ENCODE measurements at regions of chr14 and their contacts with region 1.

Region 1: DNA sequence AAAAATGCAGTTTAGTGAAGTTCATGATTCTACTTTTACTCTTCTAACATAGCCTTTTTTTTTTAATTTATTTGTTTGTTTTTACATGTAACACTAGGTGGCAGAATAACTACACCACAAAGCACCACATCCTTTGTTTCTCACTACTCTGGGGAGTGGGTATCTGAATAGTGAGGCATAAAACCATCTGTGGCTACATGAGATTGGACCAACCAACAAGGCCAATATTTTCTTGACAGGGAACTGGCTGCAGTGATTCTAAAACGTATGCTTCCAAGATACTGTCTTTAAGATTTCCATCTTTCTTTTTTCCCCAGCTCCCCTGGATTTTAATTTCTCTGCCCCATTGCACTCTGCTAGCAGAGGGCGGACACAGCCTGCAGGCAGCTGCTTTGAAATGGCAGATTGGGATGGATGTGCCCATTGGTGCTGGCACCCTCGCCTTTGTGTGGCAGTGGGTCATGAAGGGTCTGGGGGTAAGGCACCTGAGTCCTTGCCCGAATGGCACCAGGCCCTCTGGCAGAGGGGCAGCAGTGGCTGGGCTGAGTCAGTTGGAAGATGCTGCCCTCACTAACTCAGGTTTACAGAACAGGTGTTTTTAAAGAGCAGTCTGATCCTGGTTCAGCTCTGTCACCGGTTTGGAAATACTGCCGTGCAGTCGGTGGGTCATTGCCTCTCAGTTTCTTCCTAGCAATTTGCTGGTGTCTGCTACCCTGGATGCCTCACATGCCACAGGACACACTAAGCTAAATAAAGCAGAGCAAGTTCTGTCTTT is 429.1 kb downstream of the RAD51B start:
- DNase-seq: peak; percentile 80
- ATAC-seq: peak; percentile 83
- H3K4me3 ChIP-seq: no peak overlapping the region
- H3K4me3 Mint-ChIP-seq: peak overlapping the region; percentile 5
- H3K27ac ChIP-seq: peak overlapping the region; percentile 39 to 73
- H3K27ac Mint-ChIP-seq: peak overlapping the region; percentile 88
- H3K4me1 ChIP-seq: peaks cover 40 to 54% of the 10 kb centered on the region in 2 donors
- H3K4me1 Mint-ChIP-seq: peaks cover 65% of the 10 kb centered on the region
- H3K27me3 ChIP-seq: no peaks in the 10 kb centered on the region
- H3K27me3 Mint-ChIP-seq: no peaks in the 10 kb centered on the region
- CTCF ChIP-seq: peak; percentile 85

Region 2: GRCh38 chr14:68261092-68261842 is 12.6 kb after region 1 on chr14:
- CTCF ChIA-PET with region 1: interaction called, 38 read pairs
- POLR2A ChIA-PET with region 1: no interaction called
- intact Hi-C with region 1: no loop called
- DNase-seq: no peak
- ATAC-seq: peak; percentile 28
- H3K4me3 ChIP-seq: peak overlapping the region in 1 of 5 experiments; percentile 45
- H3K4me3 Mint-ChIP-seq: peak overlapping the region; percentile 68
- H3K27ac ChIP-seq: peak overlapping the region in 1 of 2 donors; percentile 62
- H3K27ac Mint-ChIP-seq: peak overlapping the region; percentile 81
- H3K4me1 ChIP-seq: peaks cover 47 to 57% of the 10 kb centered on the region in 2 donors
- H3K4me1 Mint-ChIP-seq: peaks cover 71% of the 10 kb centered on the region
- H3K27me3 ChIP-seq: no peaks in the 10 kb centered on the region
- H3K27me3 Mint-ChIP-seq: no peaks in the 10 kb centered on the region
- CTCF ChIP-seq: no peak

Region 3: DNA sequence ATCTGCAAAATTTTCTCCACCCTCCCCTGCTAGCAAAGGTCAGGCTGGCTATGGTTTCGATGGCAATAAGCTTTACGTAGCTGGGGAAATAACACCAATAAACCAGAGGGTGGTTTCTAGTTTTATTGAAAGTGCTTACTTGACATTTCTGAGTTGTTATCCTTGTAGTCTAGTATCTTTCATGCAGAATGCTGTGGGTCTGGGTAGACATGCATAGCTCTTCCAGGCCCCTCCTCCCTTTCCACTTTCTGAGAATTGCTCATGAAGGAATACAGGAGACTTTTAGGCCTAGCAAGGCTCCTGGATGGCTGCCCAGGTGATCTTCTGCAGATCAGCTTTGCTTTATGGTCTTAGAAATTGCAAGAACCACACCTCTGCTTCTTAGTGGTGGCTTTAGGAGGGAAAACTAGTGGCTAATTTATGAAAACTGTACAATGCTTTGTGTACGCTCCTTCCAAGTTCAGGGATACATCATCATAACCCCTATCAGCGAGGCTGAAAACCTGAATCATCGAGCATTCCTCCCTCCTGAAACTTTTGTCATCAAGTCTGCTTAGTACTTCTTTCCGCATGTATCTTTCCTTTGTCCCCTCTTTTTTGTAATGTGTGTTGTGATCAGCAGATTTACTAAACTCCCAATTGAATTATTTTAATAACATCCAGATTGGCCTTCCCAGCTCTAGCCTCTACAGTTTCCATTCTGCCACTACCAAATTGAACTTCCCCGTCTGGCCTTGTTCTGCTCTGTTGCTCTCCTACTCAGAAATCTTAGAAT is 44.0 kb after region 1 on chr14:
- CTCF ChIA-PET with region 1: interaction called, 110 read pairs
- POLR2A ChIA-PET with region 1: no interaction called
- intact Hi-C with region 1: no loop called
- DNase-seq: no peak
- ATAC-seq: peak; percentile 46
- H3K4me3 ChIP-seq: peak overlapping the region in 1 of 5 experiments; percentile 21
- H3K4me3 Mint-ChIP-seq: peak overlapping the region; percentile 62
- H3K27ac ChIP-seq: peak overlapping the region; percentile 70 to 85
- H3K27ac Mint-ChIP-seq: peak overlapping the region; percentile 93
- H3K4me1 ChIP-seq: peaks cover 60 to 68% of the 10 kb centered on the region in 2 donors
- H3K4me1 Mint-ChIP-seq: peaks cover 69% of the 10 kb centered on the region
- H3K27me3 ChIP-seq: no peaks in the 10 kb centered on the region
- H3K27me3 Mint-ChIP-seq: no peaks in the 10 kb centered on the region
- CTCF ChIP-seq: no peak

Region 4: GRCh38 chr14:68377459-68377858 is 128.8 kb after region 1 on chr14:
- CTCF ChIA-PET with region 1: interaction called, 21 read pairs
- POLR2A ChIA-PET with region 1: interaction called, 3 read pairs
- intact Hi-C with region 1: no loop called
- DNase-seq: peak; percentile 67
- ATAC-seq: peak; percentile 50
- H3K4me3 ChIP-seq: peak overlapping the region in 1 of 5 experiments; percentile 27
- H3K4me3 Mint-ChIP-seq: peak overlapping the region; percentile 76
- H3K27ac ChIP-seq: peak overlapping the region; percentile 34 to 60
- H3K27ac Mint-ChIP-seq: peak overlapping the region; percentile 92
- H3K4me1 ChIP-seq: peaks cover 50 to 54% of the 10 kb centered on the region in 2 donors
- H3K4me1 Mint-ChIP-seq: peaks cover 63% of the 10 kb centered on the region
- H3K27me3 ChIP-seq: no peaks in the 10 kb centered on the region
- H3K27me3 Mint-ChIP-seq: no peaks in the 10 kb centered on the region
- CTCF ChIP-seq: no peak

Region 5: GRCh38 chr14:68506021-68506644 is 257.5 kb after region 1 on chr14:
- CTCF ChIA-PET with region 1: interaction called, 13 read pairs
- POLR2A ChIA-PET with region 1: no interaction called
- intact Hi-C with region 1: no loop called
- DNase-seq: no peak
- ATAC-seq: no peak
- H3K4me3 ChIP-seq: no peak overlapping the region
- H3K4me3 Mint-ChIP-seq: peak overlapping the region; percentile 40
- H3K27ac ChIP-seq: peak overlapping the region; percentile 79 to 88
- H3K27ac Mint-ChIP-seq: peak overlapping the region; percentile 89
- H3K4me1 ChIP-seq: peaks cover 73 to 86% of the 10 kb centered on the region in 2 donors
- H3K4me1 Mint-ChIP-seq: peaks cover 83% of the 10 kb centered on the region
- H3K27me3 ChIP-seq: no peaks in the 10 kb centered on the region
- H3K27me3 Mint-ChIP-seq: no peaks in the 10 kb centered on the region
- CTCF ChIP-seq: no peak

Region 6: DNA sequence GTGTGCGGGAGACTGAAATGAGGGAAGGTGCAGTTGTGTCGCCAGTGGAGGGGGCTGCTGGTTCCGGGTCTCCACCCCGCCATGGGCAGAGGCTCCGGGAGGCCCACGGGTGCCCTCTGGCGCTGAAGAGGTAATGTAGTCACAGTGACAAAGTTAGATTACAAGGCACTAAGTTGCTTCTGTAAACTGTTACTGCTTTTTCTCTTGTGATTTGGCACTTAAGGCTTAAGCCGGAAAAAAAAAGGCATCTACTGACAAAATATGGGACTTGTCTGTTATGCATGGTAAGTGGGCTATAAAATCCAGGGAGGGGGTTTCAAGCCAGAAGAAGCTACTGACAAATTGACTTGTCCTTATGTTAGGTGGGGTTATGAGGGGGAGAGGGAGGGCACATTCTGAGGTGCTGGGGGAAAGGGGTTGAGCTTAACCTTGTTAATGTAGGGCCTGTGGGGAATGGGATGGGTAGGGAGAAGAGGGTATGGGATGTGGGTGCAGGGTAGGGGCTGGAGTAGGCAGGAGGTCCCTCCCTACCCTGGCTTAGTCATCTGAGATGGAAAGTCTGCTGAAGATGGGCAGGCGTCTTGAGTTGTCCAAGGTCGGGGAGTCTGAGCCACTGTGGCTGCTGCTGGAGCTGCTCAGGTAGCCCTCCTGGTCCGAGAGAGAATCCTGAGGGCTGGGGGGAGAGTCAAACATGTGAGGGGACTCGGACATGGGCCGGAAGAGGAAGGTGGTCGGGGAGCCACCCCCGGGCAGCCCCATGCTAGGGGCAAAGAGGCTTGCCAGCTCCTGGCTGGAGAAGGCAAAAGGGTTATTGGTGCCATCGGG is 540.5 kb after region 1 on chr14:
- CTCF ChIA-PET with region 1: interaction called, 252 read pairs
- POLR2A ChIA-PET with region 1: interaction called, 57 read pairs
- intact Hi-C with region 1: loop called (anchors 1 kb)
- DNase-seq: peak; percentile 88
- ATAC-seq: peak; percentile 11
- H3K4me3 ChIP-seq: peak overlapping the region; percentile 77 to 100 (median 94)
- H3K4me3 Mint-ChIP-seq: peak overlapping the region; percentile 97
- H3K27ac ChIP-seq: peak overlapping the region; percentile 50 to 100
- H3K27ac Mint-ChIP-seq: peak overlapping the region; percentile 100
- H3K4me1 ChIP-seq: peaks cover 32 to 59% of the 10 kb centered on the region in 2 donors
- H3K4me1 Mint-ChIP-seq: peaks cover 56% of the 10 kb centered on the region
- H3K27me3 ChIP-seq: no peaks in the 10 kb centered on the region
- H3K27me3 Mint-ChIP-seq: no peaks in the 10 kb centered on the region
- CTCF ChIP-seq: peak; percentile 81

Region 7: DNA sequence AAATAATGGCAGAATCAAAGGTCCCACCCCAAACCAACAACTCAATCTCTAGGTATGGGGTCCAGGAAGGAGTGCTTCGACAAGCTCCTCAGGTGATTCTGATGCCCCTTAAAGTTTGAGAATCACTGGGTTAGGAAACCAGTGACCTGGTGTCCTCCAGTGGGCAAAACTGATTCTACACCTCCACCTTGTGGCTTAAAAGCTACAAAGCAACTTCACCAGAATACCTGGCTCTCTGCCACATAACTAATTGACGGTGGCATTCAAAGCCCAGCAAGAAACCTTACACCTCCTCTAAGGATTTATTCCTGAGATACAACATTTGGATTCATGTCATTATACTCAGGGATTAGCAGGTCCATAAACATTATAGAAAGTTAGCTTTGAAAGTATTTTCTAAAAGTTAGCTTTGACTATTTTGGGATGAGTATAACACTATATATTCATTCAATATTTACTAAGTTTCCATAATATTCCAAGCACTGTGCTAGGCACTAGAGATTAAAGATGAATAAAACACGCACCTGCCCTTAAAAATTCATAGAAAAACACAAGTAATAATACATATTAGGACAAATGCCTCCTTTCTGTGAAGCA is 858.8 kb after region 1 on chr14:
- CTCF ChIA-PET with region 1: interaction called, 5 read pairs
- POLR2A ChIA-PET with region 1: no interaction called
- intact Hi-C with region 1: loop called (anchors 5 kb)
- DNase-seq: peak; percentile 44
- ATAC-seq: no peak
- H3K4me3 ChIP-seq: no peak overlapping the region
- H3K4me3 Mint-ChIP-seq: no peak overlapping the region
- H3K27ac ChIP-seq: no peak overlapping the region
- H3K27ac Mint-ChIP-seq: no peak overlapping the region
- H3K4me1 ChIP-seq: no peaks in the 10 kb centered on the region
- H3K4me1 Mint-ChIP-seq: no peaks in the 10 kb centered on the region
- H3K27me3 ChIP-seq: no peaks in the 10 kb centered on the region
- H3K27me3 Mint-ChIP-seq: no peaks in the 10 kb centered on the region
- CTCF ChIP-seq: peak; percentile 64

Measured in B cell (primary cell).